ENCODE measurements at regions of chr19 and their contacts with region 1.

Region 1: DNA sequence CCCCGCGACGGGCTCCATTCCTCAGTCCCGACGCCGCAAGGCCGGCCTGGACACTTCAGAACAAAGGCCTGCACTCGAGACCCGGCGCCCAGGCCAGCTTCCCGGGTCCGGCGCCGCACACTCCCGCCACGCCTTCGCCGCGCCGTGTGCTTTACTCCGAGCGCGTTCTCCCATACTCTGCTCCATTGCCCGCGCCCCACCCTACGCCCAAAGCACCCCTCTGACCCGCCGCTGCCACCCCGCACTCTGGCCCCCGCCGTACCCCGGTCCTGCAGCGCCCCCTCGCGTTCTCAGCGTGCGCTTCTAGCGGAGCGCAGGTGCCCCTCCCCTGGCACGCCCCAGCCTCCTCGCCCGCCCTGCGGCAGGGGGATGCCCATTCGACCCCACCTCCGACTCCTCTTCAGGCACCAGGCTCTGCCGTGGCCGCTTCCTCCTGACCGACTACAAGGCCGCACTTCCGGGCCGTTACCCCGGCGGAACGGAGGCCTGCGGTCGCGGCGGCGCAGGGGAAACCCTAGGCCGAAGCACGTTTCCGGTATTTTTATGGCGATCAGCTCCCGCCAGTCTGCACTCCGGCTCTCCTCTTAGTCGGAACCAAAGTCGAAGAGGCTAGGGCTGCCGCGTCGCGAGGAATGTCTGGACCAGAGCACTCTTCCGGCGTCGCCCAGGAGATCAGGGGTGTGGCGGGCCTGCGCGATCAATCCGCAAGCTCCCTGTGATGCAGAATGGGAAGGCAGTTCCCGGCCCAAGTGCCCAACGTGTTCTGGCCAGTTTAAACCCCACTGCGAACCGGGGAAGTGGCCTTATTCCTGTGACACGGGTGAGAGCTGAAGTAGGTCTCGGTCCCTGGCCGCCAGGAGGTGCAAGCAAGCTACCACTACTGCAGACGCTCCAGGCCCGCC is at the start of gene ZBTB45:
- DNase-seq: peak; percentile 95
- ATAC-seq: peak; percentile 94
- total RNA-seq, gene ZBTB45: 9.9 TPM

Region 2: GRCh38 chr19:58543826-58544590 is 24.4 kb after region 1 on chr19 and contains the start of gene TRIM28:
- intact Hi-C with region 1: loop called (anchors 1 kb)
- DNase-seq: peak; percentile 98
- ATAC-seq: peak; percentile 97
- total RNA-seq, gene TRIM28: 143 TPM

Region 3: DNA sequence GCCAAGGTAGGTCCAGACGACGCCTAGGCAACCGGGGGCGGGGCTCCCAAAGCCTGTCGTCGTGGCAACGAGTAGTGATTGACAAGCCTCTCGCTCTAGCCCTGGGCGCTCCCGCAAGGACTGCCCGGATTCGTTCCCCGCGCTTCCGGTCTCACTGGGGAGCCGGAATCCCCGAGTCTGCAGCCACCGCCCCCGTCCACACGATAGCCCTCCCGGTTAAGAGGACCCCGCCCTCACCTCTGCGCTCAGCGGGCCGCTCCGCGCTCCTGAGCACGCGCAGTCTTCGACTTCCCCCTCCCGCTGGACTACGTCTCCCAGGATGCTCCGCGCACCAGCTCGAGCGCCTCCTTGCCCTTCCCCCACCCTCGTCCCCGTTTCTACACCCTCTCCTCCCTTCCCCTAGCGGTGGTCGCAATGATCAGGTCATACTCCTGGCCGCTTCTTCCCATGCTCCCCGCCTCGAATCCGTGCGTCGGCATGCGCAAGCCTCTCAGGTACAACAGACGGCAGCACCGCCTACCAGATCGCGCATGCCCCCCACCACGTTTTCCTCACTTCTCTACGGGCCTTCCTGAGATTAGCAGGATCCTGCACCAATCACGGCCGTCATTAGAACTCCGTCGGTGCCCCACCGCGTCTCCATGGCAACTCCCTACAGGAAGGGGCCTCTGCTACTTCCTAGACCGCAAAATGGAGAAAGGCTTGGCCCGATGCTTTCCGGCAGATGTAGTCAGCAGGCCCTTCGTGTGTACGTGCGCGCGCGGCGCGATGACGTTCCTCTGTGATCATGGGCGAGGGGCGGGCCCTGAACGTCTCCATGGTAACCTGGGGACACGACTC is 53.4 kb after region 1 on chr19 and contains the start of gene MZF1:
- intact Hi-C with region 1: loop called (anchors 2 kb)
- DNase-seq: peak; percentile 100
- ATAC-seq: peak; percentile 78
- total RNA-seq, gene MZF1: 10.0 TPM

Measured in Right ventricle myocardium inferior (tissue), 1 donor.